Prostate gland (tissue), 2 donors: ENCODE measurements at regions of chr2 and their contacts with region 1.

Region 1: GRCh38 chr2:106582148-106583143 is 95.3 kb downstream of the CD8B2 start:
- DNase-seq: peak; percentile 79
- H3K4me3 ChIP-seq: no peak overlapping the region
- H3K27ac ChIP-seq: no peak overlapping the region
- H3K4me1 ChIP-seq: no peaks in the 10 kb centered on the region
- H3K27me3 ChIP-seq: no peaks in the 10 kb centered on the region
- CTCF ChIP-seq: peak; percentile 73 to 91 (median 83)
- POLR2A ChIP-seq: no peak

Region 2: DNA sequence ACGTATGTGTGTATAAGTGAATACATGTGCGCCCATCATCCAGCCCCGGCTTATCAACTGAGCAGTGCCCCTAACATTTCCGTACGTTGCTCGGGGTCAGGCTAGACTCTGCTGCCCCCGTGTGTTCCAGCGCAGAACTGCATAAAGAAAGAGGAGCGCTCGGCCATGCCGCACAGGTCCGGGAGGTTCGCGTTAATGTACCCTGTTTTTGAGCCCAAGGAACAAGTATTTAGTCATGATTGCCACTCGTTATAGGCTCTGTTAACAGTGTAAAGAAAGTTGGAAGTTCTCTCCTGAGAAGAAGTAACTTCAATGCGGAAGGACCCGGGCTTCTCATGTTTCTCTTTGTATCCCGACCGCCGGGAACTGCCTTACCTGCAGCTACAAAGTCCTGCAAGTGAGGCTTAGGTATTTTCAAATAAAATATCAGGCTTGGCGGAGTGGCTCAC is 39.6 kb before region 1 on chr2:
- intact Hi-C with region 1: loop called (anchors 5 kb)
- DNase-seq: peak; percentile 72
- H3K4me3 ChIP-seq: peak overlapping the region in 1 of 2 donors; percentile 7
- H3K27ac ChIP-seq: peak overlapping the region; percentile 75 to 77
- H3K4me1 ChIP-seq: peaks cover 5% of the 10 kb centered on the region
- H3K27me3 ChIP-seq: no peaks in the 10 kb centered on the region
- CTCF ChIP-seq: peak; percentile 72 to 87 (median 80)
- POLR2A ChIP-seq: no peak

Region 3: DNA sequence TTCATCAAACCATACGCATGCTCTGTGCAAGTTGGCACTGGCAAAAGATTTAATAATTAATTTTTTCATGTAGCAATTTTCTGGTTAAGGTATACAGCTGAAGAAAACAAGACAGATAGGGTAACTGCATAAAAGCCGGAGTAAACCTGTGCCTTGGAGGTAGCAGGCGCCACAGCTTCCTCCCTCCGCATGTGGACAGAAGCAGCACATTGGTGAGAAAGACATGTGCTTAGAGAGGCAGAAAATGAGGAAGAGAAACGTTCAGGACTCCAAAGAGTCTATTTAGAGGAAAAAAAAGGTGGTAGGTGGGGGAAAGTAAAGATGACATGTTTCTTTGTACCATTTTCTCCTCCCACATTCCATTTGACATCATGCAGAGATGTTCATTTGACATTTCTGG is 294.3 kb after region 1 on chr2:
- intact Hi-C with region 1: no loop called
- DNase-seq: no peak
- H3K4me3 ChIP-seq: no peak overlapping the region
- H3K27ac ChIP-seq: no peak overlapping the region
- H3K4me1 ChIP-seq: no peaks in the 10 kb centered on the region
- H3K27me3 ChIP-seq: no peaks in the 10 kb centered on the region
- CTCF ChIP-seq: no peak
- POLR2A ChIP-seq: no peak